ENCODE measurements at regions of chr16 and their contacts with region 1.

Region 1: GRCh38 chr16:77794586-77794985 is 6.2 kb downstream of the VAT1L start:
- DNase-seq: peak; percentile 55
- H3K4me3 ChIP-seq: no peak overlapping the region
- CTCF ChIP-seq: no peak

Region 2: DNA sequence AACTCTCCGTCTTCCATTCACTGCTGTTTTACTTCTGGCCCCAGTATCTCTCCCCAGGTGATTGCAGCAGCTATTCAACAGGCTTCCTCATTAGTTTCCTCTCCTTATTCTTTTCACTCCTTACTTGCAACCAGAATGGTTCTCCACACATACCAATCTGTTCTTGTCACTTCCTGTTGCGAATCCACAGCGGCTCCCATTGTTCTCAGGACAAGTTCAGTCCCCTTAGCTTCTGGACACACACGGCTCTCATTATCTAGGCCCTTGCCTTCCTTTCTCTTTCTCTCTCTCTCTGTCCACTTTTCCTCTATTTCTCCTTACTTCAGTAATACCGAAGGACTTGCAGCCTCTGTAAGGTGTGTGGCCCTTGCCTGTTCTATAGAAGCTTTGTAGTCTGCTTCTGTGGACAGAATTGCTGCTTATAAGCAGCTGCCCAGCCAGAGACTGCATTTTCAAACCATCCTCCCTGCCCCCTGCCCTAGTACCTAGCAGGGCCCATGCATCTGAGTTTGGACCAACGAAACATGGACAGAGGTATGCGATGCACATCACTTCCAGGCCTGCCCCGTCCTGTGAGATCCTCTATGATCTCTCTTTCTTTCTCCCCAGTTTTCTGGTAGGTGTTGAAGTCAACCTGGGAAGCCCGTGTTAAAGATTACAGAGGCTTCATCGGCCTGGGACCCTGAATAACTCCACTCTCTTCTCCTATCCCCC is 39.5 kb after region 1 on chr16:
- in situ Hi-C with region 1: loop called (anchors 5 kb)
- DNase-seq: peak; percentile 86
- H3K4me3 ChIP-seq: no peak overlapping the region
- CTCF ChIP-seq: no peak

Measured in astrocyte of the cerebellum (primary cell).